ENCODE measurements at regions of chr3 and their contacts with region 1.

Region 1: GRCh38 chr3:94256888-94257813 is 194.3 kb downstream of the NSUN3 start:
- DNase-seq: no peak
- CTCF ChIP-seq: no peak

Region 2: DNA sequence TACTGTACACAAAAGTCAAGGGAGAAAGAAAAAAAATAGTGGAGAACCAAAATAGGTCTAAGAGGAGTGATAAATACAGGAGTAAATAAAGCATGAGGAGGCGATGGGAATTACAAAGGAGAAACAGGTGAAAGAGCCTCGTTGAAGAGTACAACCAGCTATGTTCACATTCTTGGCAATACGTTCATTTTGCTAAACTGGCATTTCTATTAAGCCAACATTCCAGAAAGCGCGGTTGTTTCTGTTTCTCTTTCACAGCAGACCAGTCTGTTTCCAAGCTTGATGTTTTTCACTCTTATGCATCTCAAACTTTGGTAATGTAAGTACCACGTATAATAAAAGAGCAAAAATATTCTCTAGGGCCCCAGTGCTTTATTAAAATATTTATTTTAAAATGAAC is 119.8 kb before region 1 on chr3:
- CTCF ChIA-PET with region 1: no interaction called
- POLR2A ChIA-PET with region 1: no interaction called
- DNase-seq: no peak
- CTCF ChIP-seq: no peak

Region 3: DNA sequence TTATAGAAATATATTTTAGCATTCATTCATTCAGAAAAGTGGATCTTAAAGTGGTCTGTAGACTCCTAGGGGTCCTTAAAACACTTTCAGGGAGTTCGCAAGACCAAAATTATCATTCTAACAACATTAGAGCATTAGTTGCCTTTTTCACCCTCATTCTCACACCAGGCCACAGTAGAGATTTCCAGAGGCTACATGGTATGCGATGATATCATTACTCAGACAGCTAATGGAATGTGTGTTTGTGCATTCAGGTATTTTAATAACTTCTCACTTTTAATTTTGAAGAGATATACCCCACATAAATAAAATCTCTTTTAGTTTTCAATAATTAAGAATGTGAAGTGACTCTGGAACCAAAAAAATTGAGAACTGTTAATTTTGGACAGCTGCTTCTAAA is 12.6 kb after region 1 on chr3:
- CTCF ChIA-PET with region 1: interaction called, 14 read pairs
- POLR2A ChIA-PET with region 1: no interaction called
- DNase-seq: no peak
- CTCF ChIP-seq: no peak